Endothelial cell of umbilical vein (primary cell): ENCODE measurements at regions of chr4 and their contacts with region 1.

Region 1: DNA sequence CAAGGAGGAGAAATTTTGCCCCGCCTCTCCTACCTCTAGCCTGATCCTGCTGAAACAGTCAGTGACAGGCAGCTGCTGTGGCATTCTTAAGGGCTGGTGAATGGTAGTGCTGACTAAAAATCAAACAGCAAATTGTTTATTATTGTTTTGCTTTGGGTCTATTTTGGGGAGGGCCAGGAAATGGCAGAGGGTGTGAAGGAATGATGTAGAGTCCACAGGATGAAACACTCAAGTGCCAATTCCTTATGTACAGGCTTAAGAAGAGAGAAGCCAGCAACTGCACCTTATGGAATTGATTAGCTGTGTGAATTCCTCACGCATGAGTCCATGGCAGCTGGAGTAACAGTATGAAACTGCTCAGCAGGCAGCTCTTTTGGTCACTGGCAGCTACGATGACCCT is 39.7 kb downstream of the VEGFC start:
- DNase-seq: peak; percentile 50
- H3K4me3 ChIP-seq: no peak overlapping the region
- H3K27ac ChIP-seq: no peak overlapping the region
- H3K4me1 ChIP-seq: peaks cover 11% of the 10 kb centered on the region
- H3K27me3 ChIP-seq: no peaks in the 10 kb centered on the region
- CTCF ChIP-seq: no peak
- POLR2A ChIP-seq: no peak

Region 2: GRCh38 chr4:176653401-176654220 is 99.4 kb before region 1 on chr4:
- CTCF ChIA-PET with region 1: no interaction called
- POLR2A ChIA-PET with region 1: no interaction called
- dilution Hi-C with region 1: no loop called
- intact Hi-C with region 1: no loop called
- DNase-seq: no peak
- H3K4me3 ChIP-seq: no peak overlapping the region
- H3K27ac ChIP-seq: no peak overlapping the region
- H3K4me1 ChIP-seq: no peaks in the 10 kb centered on the region
- H3K27me3 ChIP-seq: peaks cover 0 to 9% of the 10 kb centered on the region in 2 experiments
- CTCF ChIP-seq: no peak
- POLR2A ChIP-seq: no peak

Region 3: GRCh38 chr4:176769519-176769918 is 16.5 kb after region 1 on chr4:
- CTCF ChIA-PET with region 1: interaction called, 5 read pairs
- POLR2A ChIA-PET with region 1: no interaction called
- dilution Hi-C with region 1: no loop called
- intact Hi-C with region 1: loop called (anchors 1 kb)
- DNase-seq: peak; percentile 77
- H3K4me3 ChIP-seq: no peak overlapping the region
- H3K27ac ChIP-seq: peak overlapping the region; percentile 73
- H3K4me1 ChIP-seq: peaks cover 14% of the 10 kb centered on the region
- H3K27me3 ChIP-seq: no peaks in the 10 kb centered on the region
- CTCF ChIP-seq: no peak
- POLR2A ChIP-seq: no peak

Region 4: GRCh38 chr4:176778491-176778890 is 25.4 kb after region 1 on chr4:
- CTCF ChIA-PET with region 1: interaction called, 3 read pairs
- POLR2A ChIA-PET with region 1: no interaction called
- dilution Hi-C with region 1: no loop called
- intact Hi-C with region 1: loop called (anchors 2 kb)
- DNase-seq: peak; percentile 64
- H3K4me3 ChIP-seq: no peak overlapping the region
- H3K27ac ChIP-seq: peak overlapping the region; percentile 80
- H3K4me1 ChIP-seq: peaks cover 52% of the 10 kb centered on the region
- H3K27me3 ChIP-seq: no peaks in the 10 kb centered on the region
- CTCF ChIP-seq: no peak
- POLR2A ChIP-seq: no peak